ENCODE measurements at regions of chr17 and their contacts with region 1.

Region 1: GRCh38 chr17:40113110-40113906 is 8.5 kb upstream of the MSL1 start:
- DNase-seq: peak; percentile 94
- H3K4me3 ChIP-seq: peak overlapping the region in 2 of 3 experiments; percentile 23 to 43
- H3K27ac ChIP-seq: peak overlapping the region; percentile 76
- H3K4me1 ChIP-seq: peaks cover 52% of the 10 kb centered on the region
- H3K27me3 ChIP-seq: no peaks in the 10 kb centered on the region
- CTCF ChIP-seq: peak; percentile 47 to 86
- POLR2A ChIP-seq: no peak

Region 2: GRCh38 chr17:39963829-39964228 is 149.5 kb before region 1 on chr17:
- CTCF ChIA-PET with region 1: interaction called, 7 read pairs
- POLR2A ChIA-PET with region 1: no interaction called
- dilution Hi-C with region 1: no loop called
- intact Hi-C with region 1: loop called (anchors 1 kb)
- DNase-seq: no peak
- H3K4me3 ChIP-seq: no peak overlapping the region
- H3K27ac ChIP-seq: no peak overlapping the region
- H3K4me1 ChIP-seq: no peaks in the 10 kb centered on the region
- H3K27me3 ChIP-seq: peaks cover 4% of the 10 kb centered on the region in 2 experiments
- CTCF ChIP-seq: no peak
- POLR2A ChIP-seq: no peak

Region 3: DNA sequence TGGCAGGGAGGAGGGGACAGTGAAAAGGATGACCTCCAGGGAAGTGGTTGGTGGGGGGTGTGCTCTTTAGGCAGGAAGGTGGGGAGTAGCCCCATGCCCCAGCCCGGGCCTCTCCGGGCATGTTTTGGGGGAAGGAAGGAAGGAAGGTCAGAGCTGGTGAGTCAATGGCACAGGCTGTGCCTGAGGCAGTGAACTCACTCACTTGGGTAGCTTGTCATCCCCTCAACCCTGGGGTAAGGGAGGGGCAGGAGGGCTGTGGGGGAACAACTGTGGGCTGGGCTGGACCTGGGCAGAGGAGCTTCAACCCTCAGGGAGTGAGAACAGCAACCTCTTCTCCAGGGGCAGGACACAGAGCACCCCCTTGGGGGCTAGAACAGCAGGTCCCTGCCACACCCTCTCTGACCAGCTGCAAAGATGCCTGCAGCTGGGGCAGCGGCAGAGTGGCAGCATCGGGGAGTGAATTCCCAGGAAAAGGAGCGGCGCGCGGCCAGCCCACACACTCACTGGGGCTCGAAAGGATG is 91.8 kb before region 1 on chr17:
- CTCF ChIA-PET with region 1: interaction called, 22 read pairs
- POLR2A ChIA-PET with region 1: no interaction called
- dilution Hi-C with region 1: no loop called
- intact Hi-C with region 1: no loop called
- DNase-seq: peak; percentile 80
- H3K4me3 ChIP-seq: peak overlapping the region in 1 of 3 experiments; percentile 14
- H3K27ac ChIP-seq: peak overlapping the region; percentile 99
- H3K4me1 ChIP-seq: peaks cover 90% of the 10 kb centered on the region
- H3K27me3 ChIP-seq: no peaks in the 10 kb centered on the region
- CTCF ChIP-seq: no peak
- POLR2A ChIP-seq: peak; percentile 73

Region 4: DNA sequence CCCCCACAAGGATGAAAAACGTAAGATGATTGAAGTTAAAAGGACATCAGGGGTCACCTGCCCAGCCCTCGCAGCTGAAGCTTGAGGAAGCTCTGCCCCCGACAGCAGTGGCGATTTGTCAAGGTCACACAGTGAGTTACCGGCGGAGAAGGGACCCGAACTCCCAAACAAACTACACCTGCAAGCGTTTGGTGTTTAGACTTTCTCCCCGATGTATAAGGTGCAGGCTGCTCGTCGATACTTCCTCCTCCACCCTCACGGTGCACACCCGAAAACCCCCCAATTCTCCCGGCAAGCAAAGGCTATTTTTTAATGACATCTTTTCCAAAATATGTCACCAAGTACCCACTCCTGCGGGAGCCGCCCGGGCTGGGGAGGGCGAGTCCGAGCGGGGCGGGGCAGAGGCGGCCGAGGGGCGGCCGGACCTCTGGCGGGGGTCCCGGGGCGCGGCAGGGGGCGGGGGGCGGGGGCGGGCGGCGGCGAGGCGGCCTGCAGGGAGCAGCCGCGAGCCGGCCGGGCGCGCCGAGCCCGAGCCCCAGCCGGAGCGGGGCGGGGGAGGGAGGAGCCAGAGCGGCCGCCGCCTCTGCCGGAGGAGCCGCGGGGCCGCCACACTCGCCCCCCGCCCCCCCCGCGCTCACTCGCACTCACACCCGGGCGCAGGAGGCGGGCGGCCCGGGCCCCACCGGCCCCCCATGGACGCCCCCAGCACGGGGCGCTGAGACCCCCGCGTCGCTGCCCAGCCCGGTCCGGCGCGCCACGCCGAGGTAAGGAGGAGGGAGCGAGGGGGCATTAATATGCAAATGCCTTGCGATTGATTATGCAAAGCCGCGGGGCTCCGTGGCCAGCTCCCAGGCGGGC is 50.8 kb before region 1 on chr17 and contains the start of gene THRA:
- CTCF ChIA-PET with region 1: interaction called, 62 read pairs
- POLR2A ChIA-PET with region 1: interaction called, 3 read pairs
- dilution Hi-C with region 1: no loop called
- intact Hi-C with region 1: loop called (anchors 1 kb)
- DNase-seq: peak; percentile 67
- H3K4me3 ChIP-seq: peak within 1 kb of the TSS; percentile 48 to 96 (median 86)
- H3K27ac ChIP-seq: no peak within 1 kb of the TSS
- H3K4me1 ChIP-seq: peaks cover 16% of the 10 kb centered on the region
- H3K27me3 ChIP-seq: peaks cover 0 to 3% of the 10 kb centered on the region in 2 experiments
- CTCF ChIP-seq: no peak
- POLR2A ChIP-seq: no peak
- total RNA-seq, gene THRA: 24.9 and 29.6 TPM in 2 replicates

Region 5: GRCh38 chr17:40091691-40092397 is 21.5 kb before region 1 on chr17:
- CTCF ChIA-PET with region 1: interaction called, 43 read pairs
- POLR2A ChIA-PET with region 1: interaction called, 4 read pairs
- dilution Hi-C with region 1: no loop called
- intact Hi-C with region 1: no loop called
- DNase-seq: no peak
- H3K4me3 ChIP-seq: no peak overlapping the region
- H3K27ac ChIP-seq: no peak overlapping the region
- H3K4me1 ChIP-seq: peaks cover 5% of the 10 kb centered on the region
- H3K27me3 ChIP-seq: no peaks in the 10 kb centered on the region
- CTCF ChIP-seq: no peak
- POLR2A ChIP-seq: no peak

Region 6: DNA sequence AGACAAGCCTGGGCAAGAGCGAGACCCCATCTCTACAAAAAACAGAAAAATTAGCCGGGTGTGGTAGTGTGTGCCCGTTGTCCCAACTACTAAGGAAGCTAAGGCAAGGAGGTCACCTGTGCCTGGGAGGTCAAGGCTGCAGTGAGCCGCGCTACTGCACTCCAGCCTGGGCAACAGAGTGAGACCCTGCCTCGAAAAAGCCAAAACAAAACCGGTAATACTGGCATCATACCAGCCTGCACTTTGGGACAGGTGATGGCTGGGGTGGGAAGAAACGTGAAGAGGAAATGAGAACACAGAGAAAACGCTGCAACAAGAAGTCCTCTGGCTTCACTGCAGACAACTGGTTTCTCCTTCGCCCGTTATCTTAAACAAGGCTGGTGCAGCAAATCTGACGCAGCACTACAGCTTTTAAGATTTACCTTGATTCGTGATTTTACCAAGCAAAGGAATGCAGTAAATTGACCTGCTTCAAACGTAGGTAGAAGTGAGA is 26.3 kb after region 1 on chr17:
- CTCF ChIA-PET with region 1: interaction called, 21 read pairs
- POLR2A ChIA-PET with region 1: interaction called, 3 read pairs
- dilution Hi-C with region 1: no loop called
- intact Hi-C with region 1: no loop called
- DNase-seq: no peak
- H3K4me3 ChIP-seq: peak overlapping the region; percentile 18 to 77 (median 42)
- H3K27ac ChIP-seq: peak overlapping the region; percentile 46
- H3K4me1 ChIP-seq: peaks cover 17% of the 10 kb centered on the region
- H3K27me3 ChIP-seq: no peaks in the 10 kb centered on the region
- CTCF ChIP-seq: no peak
- POLR2A ChIP-seq: no peak

Region 7: DNA sequence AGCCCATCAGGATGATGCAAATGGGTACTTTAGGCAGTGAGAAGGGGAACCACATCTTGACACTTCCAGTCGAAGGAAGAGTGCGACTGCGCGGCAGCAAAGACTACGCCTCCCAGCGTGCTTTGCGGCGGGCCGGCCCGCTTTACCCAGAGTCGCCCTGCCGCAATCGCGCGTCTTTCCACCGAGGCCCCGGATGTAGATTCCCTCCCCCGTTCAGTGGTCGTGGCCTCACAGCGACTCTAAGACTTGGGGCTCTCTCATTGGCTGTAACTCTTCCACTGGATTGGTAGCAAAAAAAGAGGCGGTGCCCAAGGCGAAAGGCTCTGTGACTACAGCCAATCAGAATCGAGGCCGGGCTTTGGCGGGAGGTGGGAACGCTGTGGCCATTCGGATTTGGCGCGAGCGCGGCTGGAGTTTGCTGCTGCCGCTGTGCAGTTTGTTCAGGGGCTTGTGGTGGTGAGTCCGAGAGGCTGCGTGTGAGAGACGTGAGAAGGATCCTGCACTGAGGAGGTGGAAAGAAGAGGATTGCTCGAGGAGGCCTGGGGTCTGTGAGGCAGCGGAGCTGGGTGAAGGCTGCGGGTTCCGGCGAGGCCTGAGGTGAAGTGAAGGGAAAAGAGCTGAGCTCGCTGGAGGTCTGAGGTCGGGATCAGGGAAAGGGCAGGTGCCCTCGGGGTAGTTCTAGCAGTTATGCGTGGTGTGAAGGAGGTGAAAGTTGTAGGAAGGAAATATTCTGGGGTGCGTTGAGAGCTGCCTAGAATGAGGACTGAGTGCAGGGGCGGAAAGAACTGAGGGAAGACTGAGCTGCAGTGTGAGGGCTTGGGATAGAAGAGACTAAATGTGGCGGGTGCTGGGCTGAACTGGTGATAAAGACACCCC is 174.4 kb after region 1 on chr17 and contains the start of gene CDC6:
- CTCF ChIA-PET with region 1: interaction called, 24 read pairs
- POLR2A ChIA-PET with region 1: no interaction called
- dilution Hi-C with region 1: no loop called
- intact Hi-C with region 1: loop called (anchors 1 kb)
- DNase-seq: peak; percentile 99
- H3K4me3 ChIP-seq: peak within 1 kb of the TSS; percentile 43 to 72 (median 65)
- H3K27ac ChIP-seq: peak within 1 kb of the TSS; percentile 50
- H3K4me1 ChIP-seq: peaks cover 35% of the 10 kb centered on the region
- H3K27me3 ChIP-seq: no peaks in the 10 kb centered on the region
- CTCF ChIP-seq: no peak
- POLR2A ChIP-seq: peak; percentile 68
- total RNA-seq, gene CDC6: 49.9 and 55.2 TPM in 2 replicates

Measured in endothelial cell of umbilical vein (primary cell).